ENCODE measurements at regions of chr1 and their contacts with region 1.

Region 1: GRCh38 chr1:224447251-224447650 is 12.7 kb upstream of the WDR26 start:
- DNase-seq: no peak
- H3K4me3 ChIP-seq: no peak overlapping the region
- H3K27ac ChIP-seq: no peak overlapping the region
- H3K4me1 ChIP-seq: no peaks in the 10 kb centered on the region
- CTCF ChIP-seq: no peak

Region 2: GRCh38 chr1:224427346-224427745 is 19.9 kb before region 1 on chr1:
- CTCF ChIA-PET with region 1: no interaction called
- POLR2A ChIA-PET with region 1: interaction called, 11 read pairs
- intact Hi-C with region 1: no loop called
- DNase-seq: no peak
- H3K4me3 ChIP-seq: no peak overlapping the region
- H3K27ac ChIP-seq: no peak overlapping the region
- H3K4me1 ChIP-seq: peaks cover 42% of the 10 kb centered on the region
- CTCF ChIP-seq: no peak

Region 3: DNA sequence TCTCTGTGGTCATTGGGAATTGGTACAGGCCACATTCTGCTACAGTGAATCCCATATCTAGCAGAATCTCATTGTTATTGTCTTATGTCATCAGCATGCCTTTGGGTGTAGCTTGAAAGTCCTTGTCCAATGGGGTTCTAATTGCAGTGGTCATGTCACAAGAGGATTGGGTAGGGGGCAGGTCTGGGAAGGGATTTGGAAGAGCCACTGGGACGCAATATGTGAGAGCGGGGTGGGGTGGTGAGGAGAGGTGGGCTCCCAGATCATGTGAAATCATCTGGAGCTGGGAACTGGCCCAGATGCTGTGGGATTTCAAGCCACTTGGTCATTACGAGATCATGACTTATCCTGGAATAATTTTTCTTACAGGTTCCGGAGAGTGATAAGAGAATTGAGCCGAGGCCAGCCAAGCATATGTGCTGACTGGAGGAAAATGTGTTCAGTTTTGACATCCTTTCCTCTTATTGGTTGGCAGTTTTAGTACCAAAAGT is 185.2 kb after region 1 on chr1:
- CTCF ChIA-PET with region 1: no interaction called
- POLR2A ChIA-PET with region 1: no interaction called
- intact Hi-C with region 1: no loop called
- DNase-seq: no peak
- H3K4me3 ChIP-seq: no peak overlapping the region
- H3K27ac ChIP-seq: no peak overlapping the region
- H3K4me1 ChIP-seq: no peaks in the 10 kb centered on the region
- CTCF ChIP-seq: no peak

Measured in OCI-LY7 (cell line).